GM13977 (cell line): ENCODE measurements at regions of chr1 and their contacts with region 1.

Region 1: GRCh38 chr1:109773146-109773899 is 9.6 kb upstream of the EPS8L3 start:
- DNase-seq: peak; percentile 82
- CTCF ChIP-seq: peak; percentile 91

Region 2: DNA sequence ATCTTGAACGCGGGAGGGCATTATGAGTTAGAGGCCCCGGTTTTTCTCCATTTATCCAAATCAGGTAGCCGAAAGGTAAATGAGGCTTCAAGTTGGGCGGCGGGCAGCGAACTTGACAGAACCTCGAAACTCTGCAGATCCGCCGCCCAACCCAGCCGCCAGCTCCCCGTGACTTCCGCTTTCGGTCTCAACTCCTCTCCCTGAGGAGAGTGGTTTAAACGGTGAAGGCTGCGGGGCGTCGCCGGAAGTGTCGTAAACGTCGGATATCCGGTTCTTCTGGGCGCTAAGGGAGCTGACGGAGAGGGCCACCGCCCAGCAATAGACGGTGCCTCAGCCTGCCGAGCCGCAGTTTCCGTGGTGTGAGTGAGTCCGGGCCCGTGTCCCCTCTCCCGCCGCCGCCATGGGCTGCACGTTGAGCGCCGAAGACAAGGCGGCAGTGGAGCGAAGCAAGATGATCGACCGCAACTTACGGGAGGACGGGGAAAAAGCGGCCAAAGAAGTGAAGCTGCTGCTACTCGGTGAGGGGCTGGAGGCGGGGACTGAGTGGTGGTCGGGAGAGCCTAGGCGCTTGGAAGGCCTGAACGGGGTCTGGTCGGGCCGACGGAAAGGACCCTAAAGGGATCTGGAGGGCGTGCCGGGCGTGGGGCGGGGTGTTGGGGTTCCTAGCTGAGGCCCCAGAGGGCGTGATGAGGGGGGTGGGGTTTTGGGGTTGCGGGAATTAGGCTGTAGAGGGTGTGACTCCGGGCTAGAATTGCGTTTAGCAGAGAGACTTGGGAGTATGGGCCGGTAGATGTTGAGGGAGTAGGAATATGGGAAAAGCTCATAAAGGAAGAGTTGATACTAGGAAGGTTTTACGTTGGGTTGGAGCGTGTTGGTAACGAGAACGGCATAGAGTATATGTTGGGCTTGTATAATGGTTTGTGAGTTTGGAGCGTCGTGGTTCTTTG is 224.7 kb before region 1 on chr1 and contains the start of gene GNAI3:
- in situ Hi-C with region 1: loop called (anchors 10 kb)
- DNase-seq: peak; percentile 92
- CTCF ChIP-seq: no peak

Region 3: DNA sequence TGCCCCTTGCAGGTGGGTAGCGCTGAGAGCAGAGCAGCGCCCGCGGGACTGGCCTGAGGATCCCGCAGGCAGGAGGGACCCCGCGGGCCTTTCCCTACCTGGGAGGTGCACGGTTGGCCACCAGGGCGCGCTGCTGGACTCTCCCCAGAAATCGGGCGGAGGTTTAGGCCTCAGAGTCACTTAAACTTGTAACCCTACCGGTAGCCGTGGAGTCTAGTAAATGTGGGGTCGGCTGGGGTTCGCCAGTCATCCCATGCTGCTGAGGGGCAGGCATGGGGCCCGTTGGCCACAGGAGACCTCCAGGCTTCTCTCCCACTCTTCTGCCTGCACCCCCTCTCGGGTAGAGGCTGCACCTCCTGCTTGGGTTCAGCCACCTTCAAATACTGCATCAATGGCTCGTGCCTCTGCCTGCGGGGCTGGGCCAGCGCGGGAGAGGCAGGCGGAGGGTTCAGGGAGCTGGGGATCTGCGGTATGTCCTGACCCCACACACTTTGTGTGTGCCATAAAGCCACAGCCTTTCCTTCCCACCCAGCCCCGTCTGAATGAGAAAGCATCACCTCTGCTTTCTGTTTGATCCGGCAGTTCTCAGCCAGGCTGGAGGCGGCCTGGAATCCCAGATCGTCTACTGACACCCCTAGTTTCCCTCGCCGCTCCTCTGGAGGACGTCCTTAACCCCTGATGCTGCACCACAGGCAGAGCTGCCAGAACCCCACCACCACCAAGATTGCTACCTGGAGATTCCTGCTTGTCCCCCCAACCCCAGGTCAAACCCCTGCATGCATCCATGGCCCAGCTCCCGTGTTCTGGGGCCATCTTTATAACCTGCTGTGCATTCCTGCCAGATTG is 129.7 kb before region 1 on chr1:
- in situ Hi-C with region 1: loop called (anchors 5 kb)
- DNase-seq: peak; percentile 82
- CTCF ChIP-seq: peak; percentile 96

Region 4: DNA sequence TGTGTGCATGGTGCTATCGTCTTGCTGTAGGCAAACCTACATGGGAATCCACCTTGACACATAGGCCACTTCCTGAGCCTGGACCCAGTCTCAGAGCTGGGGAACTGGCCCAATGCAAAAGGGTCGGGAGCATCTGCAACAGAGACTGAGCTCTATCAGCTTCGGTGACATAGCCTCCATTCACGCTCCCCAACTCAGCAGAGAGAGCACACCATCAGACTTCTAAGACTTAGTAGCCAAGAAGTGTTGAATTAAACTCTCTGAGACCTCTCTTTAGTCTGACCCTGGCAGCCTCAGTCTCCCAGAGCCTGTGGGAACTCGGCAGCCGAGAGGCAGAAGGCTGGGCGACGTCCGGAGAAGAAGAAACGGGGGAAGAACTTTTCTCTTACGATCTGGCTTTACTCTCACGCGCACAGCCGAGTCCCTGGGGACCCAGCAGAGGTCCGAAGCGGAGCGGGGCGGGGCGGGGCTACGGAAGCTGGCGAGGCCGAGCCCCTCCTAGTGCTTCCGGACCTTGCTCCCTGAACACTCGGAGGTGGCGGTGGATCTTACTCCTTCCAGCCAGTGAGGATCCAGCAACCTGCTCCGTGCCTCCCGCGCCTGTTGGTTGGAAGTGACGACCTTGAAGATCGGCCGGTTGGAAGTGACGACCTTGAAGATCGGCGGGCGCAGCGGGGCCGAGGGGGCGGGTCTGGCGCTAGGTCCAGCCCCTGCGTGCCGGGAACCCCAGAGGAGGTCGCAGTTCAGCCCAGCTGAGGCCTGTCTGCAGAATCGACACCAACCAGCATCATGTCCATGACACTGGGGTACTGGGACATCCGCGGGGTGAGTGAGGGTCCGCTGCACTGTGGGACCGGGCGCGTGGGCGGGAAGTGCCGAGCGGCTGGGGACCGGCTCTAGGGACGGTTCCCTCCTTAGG is 117.5 kb before region 1 on chr1 and contains the start of gene GSTM4:
- in situ Hi-C with region 1: no loop called
- DNase-seq: peak; percentile 93
- CTCF ChIP-seq: no peak

Region 5: DNA sequence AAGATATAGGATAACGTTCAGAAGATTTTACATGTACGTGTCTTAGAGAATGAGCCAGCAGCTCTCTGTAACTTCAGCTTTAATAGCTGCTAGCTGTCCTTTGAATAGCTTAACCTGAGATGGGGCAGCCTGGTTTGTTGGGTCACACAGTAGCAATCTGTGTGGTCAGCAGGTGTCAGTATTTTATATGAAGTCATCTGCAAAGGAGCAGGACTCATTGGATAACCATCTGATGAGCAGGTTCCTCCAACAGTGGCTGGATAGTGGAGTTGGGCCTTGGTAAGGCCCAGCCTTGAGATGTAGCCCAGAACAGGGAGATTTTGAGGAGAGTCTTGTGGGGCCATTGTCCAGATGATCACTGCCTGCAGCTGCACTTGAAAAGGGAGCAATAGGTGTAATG is 54.8 kb before region 1 on chr1:
- in situ Hi-C with region 1: no loop called
- DNase-seq: no peak
- CTCF ChIP-seq: no peak

Region 6: GRCh38 chr1:109838838-109839240 is 65.5 kb after region 1 on chr1:
- in situ Hi-C with region 1: no loop called
- DNase-seq: no peak
- CTCF ChIP-seq: no peak

Region 7: DNA sequence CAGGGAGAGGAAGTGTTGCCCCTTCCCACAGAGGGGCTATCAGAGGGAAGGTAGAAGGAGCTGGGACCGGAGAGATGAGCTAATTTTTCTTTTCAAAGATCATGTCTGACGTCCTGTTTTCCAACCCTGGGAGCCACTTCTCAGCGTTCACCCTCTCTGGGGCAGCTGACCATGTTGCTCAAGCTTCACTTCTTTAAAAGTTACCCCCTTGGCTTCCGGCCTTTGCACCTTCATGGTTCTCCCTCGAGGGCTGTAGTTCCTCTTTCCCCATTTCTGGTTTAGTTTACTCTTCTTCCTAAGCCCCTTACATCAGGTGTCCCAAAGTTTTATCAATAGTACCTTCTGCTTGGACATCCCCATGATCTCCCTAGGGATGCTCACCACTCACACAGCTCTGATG is 113.5 kb after region 1 on chr1:
- in situ Hi-C with region 1: no loop called
- DNase-seq: no peak
- CTCF ChIP-seq: no peak

Region 8: DNA sequence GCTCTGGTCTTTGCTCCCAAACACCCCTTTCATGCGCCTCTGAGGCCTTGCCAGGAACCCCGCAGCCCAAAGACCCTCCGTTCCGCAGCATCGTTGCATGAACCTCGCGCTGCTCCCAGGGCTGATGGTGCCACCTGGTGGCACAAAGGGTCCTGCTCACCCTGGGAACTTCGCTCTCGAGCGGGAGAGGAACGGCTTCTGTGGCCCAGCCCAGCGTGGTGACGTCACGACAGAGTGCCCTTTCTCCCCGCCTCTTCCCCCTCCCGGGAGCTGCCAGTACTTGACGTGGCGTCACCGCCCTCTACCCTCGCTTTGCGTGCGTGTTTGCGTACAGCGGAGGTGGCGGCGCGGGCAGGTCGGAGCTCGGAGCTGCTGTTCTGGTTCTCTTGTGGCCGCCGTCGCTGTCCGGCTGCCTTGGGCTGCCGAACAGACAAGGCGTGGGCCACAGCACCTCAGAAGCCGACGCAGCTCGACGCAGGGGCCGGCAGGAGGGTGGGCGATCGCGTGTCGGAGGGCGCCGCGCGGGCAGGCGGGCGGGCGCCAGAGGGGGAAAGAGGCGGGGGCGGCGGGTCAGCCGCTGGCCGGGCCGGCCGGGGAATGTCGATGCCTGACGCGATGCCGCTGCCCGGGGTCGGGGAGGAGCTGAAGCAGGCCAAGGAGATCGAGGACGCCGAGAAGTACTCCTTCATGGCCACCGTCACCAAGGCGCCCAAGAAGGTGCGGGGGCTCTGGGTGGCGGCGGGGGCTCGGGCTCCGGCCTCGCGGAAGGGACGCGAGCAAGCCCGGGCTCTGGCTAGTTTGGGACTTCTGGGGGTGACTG is 211.3 kb after region 1 on chr1 and contains the start of gene AHCYL1:
- in situ Hi-C with region 1: loop called (anchors 5 kb)
- DNase-seq: peak; percentile 100
- CTCF ChIP-seq: peak; percentile 97